ENCODE measurements at regions of chrX and their contacts with region 1.

Region 1: GRCh38 chrX:121308276-121308805 is 260.9 kb downstream of the GLUD2 start:
- DNase-seq: peak; percentile 54
- H3K4me3 Mint-ChIP-seq: peak overlapping the region; percentile 49
- H3K27ac Mint-ChIP-seq: peak overlapping the region; percentile 96
- H3K4me1 Mint-ChIP-seq: peaks cover 29% of the 10 kb centered on the region
- H3K27me3 Mint-ChIP-seq: no peaks in the 10 kb centered on the region

Region 2: DNA sequence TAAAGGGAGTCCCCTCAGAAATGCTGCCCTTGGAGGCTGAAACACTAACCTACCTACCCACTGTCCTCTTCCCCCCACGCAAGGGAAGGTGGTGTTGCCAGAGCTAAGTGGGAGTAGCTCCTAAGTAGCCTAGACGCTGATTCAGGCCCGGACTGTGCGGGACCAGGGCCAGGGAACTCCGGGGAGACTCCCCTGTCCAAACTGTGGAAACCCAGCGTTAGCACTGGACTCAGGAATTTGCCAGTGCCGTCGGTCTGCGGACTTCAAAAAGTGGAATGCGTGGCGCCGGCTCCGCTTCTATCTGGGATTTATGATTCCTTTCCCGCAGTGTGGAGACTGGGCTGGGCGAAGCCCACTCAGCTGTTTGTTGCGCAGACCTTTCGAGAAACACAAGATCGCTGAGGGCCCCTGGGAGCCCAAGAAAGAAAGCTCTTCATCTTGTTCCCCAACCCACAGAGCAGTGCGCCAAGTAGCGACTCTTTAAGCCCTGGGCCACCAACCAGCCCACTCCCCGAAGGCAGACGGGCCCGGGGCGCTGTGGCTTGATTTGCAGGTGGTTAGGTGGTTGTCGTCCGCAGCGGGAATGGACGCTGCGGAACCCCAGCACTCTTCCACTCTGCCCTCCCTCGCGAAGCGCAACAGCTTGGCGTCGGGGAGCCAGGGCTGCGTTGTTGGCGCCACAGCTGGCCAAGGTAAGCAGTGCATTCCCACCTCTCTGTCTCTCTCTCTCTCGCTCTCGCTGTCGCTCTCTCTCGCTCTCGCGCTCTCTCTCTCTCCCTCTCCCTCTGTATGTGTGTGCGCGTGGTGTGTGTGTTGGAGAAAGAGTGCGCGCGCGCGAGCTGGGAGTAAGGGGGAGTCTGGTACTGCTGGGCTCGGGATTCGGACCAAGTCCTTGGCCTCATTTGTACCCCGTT is 999.1 kb before region 1 on chrX:
- intact Hi-C with region 1: loop called (anchors 5 kb)
- DNase-seq: peak; percentile 52
- H3K4me3 Mint-ChIP-seq: peak overlapping the region; percentile 71
- H3K27ac Mint-ChIP-seq: no peak overlapping the region
- H3K4me1 Mint-ChIP-seq: peaks cover 21% of the 10 kb centered on the region
- H3K27me3 Mint-ChIP-seq: peaks cover 61% of the 10 kb centered on the region

Region 3: GRCh38 chrX:120736989-120737388 is 571.4 kb before region 1 on chrX:
- intact Hi-C with region 1: loop called (anchors 1 kb)
- DNase-seq: no peak
- H3K4me3 Mint-ChIP-seq: no peak overlapping the region
- H3K27ac Mint-ChIP-seq: peak overlapping the region; percentile 31
- H3K4me1 Mint-ChIP-seq: peaks cover 27% of the 10 kb centered on the region
- H3K27me3 Mint-ChIP-seq: no peaks in the 10 kb centered on the region

Region 4: DNA sequence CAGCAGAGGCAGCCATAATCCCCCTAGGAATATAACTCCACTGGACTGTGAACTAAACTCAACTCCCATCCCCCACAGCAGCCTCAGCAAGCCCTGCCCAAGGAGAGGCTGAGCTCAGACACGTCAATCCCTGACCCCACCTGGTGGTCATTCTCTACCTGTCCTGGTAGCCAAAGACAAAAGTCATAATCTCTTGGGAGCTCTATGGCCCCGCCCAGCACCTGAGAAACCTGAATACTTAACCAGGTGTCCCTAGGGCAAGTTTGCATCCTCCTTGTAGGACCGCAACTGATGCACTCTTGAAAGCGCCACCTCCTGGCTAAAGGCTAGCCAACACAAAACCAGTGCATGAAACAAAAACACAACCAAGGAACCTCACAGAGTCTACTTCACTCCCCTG is 451.1 kb before region 1 on chrX:
- intact Hi-C with region 1: loop called (anchors 5 kb)
- DNase-seq: no peak
- H3K4me3 Mint-ChIP-seq: no peak overlapping the region
- H3K27ac Mint-ChIP-seq: no peak overlapping the region
- H3K4me1 Mint-ChIP-seq: peaks cover 36% of the 10 kb centered on the region
- H3K27me3 Mint-ChIP-seq: no peaks in the 10 kb centered on the region

Region 5: GRCh38 chrX:121244511-121244910 is 63.8 kb before region 1 on chrX:
- intact Hi-C with region 1: loop called (anchors 5 kb)
- DNase-seq: no peak
- H3K4me3 Mint-ChIP-seq: no peak overlapping the region
- H3K27ac Mint-ChIP-seq: no peak overlapping the region
- H3K4me1 Mint-ChIP-seq: peaks cover 17% of the 10 kb centered on the region
- H3K27me3 Mint-ChIP-seq: no peaks in the 10 kb centered on the region

Region 6: DNA sequence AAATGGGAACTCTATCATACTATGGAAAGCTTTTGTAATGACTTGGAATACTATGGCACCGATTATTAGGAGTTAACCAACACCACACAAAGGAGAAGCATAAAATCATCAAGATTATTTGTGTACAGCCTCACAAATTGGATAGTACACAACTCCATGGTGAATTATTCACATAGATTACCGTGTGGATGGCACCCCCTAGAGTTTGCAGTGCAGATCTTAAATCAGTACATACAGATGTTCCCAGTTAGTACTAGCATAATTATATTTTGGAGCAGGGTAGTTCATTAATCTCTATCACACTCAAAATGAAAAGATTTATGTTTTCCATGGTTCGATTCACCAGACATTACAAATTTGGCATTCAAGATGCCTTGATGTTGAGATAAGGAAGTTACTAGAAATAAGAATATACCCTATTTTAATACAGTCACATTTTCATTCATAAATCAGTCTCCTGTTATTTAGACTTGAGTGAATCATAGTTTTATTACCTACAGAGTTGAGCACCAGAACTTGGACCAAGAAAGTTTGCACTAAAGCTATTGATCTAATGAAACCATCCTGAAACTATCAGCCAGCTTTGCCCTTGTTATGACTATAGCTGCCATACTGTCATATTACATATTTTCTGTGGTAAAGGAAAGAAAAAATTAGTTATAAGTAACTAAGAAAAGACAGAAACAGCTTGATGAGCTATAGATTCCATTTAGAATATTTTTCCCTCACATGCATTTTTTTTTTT is 270.8 kb after region 1 on chrX:
- intact Hi-C with region 1: loop called (anchors 5 kb)
- DNase-seq: no peak
- H3K4me3 Mint-ChIP-seq: no peak overlapping the region
- H3K27ac Mint-ChIP-seq: no peak overlapping the region
- H3K4me1 Mint-ChIP-seq: peaks cover 2% of the 10 kb centered on the region
- H3K27me3 Mint-ChIP-seq: no peaks in the 10 kb centered on the region

Region 7: DNA sequence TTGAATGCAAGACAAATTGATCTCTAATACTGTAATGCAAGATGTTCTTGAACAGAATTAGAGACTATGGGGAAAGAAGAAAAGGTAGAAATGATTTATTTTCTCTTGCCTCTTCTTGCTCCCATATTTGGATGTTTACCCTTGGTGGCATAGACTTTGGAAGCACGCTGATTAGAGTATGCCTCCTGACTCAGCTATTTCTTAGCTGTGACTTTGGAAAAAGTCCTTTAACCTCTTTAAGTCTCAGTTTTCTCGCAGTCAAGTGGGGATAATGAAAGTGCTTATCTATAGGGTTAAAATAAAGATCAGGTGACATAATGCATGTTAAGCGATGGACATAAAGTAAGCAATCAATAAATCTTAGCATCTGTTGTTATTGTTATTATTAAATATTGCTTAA is 284.5 kb after region 1 on chrX:
- intact Hi-C with region 1: no loop called
- DNase-seq: no peak
- H3K4me3 Mint-ChIP-seq: no peak overlapping the region
- H3K27ac Mint-ChIP-seq: no peak overlapping the region
- H3K4me1 Mint-ChIP-seq: no peaks in the 10 kb centered on the region
- H3K27me3 Mint-ChIP-seq: no peaks in the 10 kb centered on the region